Dorsolateral prefrontal cortex (tissue), 120 donors: ENCODE measurements at regions of chr6 and their contacts with region 1.

Region 1: GRCh38 chr6:118651282-118652050 is at the start of gene CEP85L:
- DNase-seq: peak; percentile 84 to 95 (median 92)
- H3K4me3 ChIP-seq: peak within 1 kb of the TSS; percentile 73 to 98 (median 92)
- H3K27ac ChIP-seq: peak within 1 kb of the TSS; percentile 83 to 100 (median 96)
- H3K27me3 ChIP-seq: no peaks in the 10 kb centered on the region
- CTCF ChIP-seq: peak in 22 of 56 donors; percentile 3 to 49 (median 16)
- total RNA-seq, gene CEP85L: 25.2 to 62.1 (median 36.1) TPM

Region 2: DNA sequence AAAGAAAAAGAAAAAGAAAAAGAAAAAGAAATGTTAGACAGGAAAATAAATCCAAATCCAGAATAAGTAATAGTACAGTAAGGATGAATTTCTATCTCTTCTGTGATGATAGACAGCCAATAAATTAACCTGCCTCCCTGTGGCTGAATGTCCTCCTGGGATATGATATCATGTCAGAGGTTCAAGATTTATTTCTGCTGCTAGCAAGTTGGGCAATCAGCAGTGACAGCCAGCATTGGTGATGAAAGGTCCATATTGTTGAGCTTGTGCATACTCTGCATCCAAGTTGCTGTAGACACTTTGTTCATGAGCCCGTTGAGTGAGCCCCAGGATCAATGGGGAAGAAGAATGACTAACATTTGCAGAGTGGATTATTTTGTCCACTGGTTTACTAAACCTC is 44.8 kb after region 1 on chr6:
- intact Hi-C with region 1: no loop called
- DNase-seq: no peak
- H3K4me3 ChIP-seq: no peak overlapping the region
- H3K27ac ChIP-seq: no peak overlapping the region
- H3K27me3 ChIP-seq: no peaks in the 10 kb centered on the region
- CTCF ChIP-seq: no peak

Region 3: DNA sequence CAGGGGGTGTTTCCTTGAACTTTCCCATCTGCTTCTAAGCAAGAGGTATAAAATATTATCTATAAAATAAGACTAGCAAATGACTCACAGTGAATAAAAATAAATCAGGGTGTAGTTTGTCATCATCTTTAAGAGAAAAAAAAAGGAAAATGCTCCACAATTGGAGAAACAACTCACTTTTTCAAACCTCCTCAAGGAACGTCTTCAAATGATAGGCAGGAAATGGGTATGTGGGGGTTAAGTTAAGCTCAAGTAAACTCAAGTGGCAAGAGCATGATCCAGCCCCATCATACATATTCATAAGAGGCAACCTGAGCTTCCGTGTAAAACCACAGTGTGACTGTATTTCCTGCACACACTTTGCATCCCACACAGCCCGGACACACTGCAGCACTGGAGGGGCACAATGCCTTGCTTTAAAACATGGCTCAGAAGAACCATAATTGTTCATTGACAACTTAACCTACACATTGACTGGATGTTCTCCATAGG is 58.4 kb after region 1 on chr6:
- intact Hi-C with region 1: loop called (anchors 2 to 5 kb)
- DNase-seq: no peak
- H3K4me3 ChIP-seq: peak overlapping the region in 42 of 59 donors; percentile 10 to 64 (median 49)
- H3K27ac ChIP-seq: peak overlapping the region in 47 of 59 donors; percentile 2 to 81 (median 57)
- H3K27me3 ChIP-seq: no peaks in the 10 kb centered on the region
- CTCF ChIP-seq: no peak

Region 4: GRCh38 chr6:118776607-118777549 is 125.4 kb after region 1 on chr6:
- intact Hi-C with region 1: loop called (anchors 5 to 10 kb)
- DNase-seq: peak in 6 of 10 donors; percentile 38 to 83 (median 64)
- H3K4me3 ChIP-seq: peak overlapping the region in 2 of 59 donors; percentile 6 to 16
- H3K27ac ChIP-seq: no peak overlapping the region
- H3K27me3 ChIP-seq: no peaks in the 10 kb centered on the region
- CTCF ChIP-seq: peak; percentile 52 to 88 (median 79)

Region 5: DNA sequence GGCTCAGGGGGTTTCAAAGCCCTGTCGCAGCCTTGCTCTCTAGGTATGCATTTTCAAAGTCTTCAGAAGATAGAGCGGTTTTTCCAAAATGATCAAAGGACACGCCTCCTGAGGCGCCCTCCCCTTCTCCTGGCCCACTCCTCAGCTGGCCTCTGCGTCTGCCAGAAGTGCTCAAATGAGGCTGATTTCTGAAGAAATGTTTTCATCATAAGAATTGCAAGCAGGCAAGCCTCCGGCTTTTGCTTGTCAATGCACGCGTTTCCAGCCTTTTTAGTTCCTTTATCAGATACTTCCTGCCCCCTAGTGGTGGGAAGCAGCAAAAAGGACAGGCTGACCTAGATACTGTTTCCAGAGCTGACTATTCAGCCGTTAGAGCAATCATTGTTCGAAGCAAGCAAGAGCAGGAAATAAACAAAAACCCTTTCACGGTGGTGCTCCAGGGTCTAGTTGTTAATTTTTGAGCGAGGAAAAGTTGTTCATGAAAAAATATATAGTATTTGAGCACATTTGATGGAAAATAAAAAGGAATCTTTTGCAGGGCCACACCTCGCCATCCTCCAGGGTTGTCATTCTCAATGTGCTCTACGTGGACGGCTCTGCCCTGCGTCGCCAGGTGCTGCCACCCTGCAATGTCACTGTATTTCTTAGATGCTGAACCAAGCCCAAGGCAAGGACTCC is 149.1 kb after region 1 on chr6:
- intact Hi-C with region 1: loop called (anchors 5 to 10 kb)
- DNase-seq: peak; percentile 44 to 97 (median 86)
- H3K4me3 ChIP-seq: peak overlapping the region in 55 of 59 donors; percentile 9 to 64 (median 39)
- H3K27ac ChIP-seq: peak overlapping the region in 52 of 59 donors; percentile 9 to 87 (median 66)
- H3K27me3 ChIP-seq: no peaks in the 10 kb centered on the region
- CTCF ChIP-seq: peak; percentile 85 to 100 (median 94)

Region 6: DNA sequence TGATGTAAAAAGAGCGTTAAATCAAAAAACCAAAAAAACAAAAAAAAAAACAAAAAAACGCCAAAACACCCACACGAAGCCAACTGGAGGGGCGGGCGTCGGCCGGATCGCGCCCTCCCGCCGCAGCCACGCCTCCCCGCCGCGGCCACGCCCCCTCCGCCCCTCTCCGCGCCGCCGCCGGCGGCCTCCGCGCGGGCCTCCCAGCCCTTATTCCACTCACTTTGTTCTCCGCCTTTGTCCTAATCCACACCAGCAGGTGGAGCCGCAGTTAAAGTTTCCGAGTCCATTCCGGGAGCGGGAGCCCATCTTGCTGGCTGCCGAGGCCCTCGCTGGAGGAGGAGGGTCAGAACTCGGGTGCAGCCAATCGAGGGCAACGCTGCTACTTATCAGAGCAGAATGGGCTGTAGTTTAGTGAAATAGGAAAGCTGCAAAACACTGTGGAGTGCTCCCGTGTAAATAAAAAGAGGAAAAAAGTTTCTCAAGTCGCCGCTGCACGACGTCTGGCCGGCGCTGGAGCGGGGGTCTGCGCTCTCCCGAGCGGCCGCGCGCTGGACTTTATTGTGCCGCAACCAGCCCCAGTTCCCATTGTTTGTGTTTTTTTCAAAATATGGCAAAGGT is 242.4 kb after region 1 on chr6 and contains the start of gene ASF1A:
- intact Hi-C with region 1: loop called (anchors 2 kb)
- DNase-seq: peak; percentile 85 to 97 (median 97)
- H3K4me3 ChIP-seq: peak within 1 kb of the TSS; percentile 59 to 96 (median 86)
- H3K27ac ChIP-seq: peak within 1 kb of the TSS; percentile 75 to 99 (median 95)
- H3K27me3 ChIP-seq: no peaks in the 10 kb centered on the region
- CTCF ChIP-seq: peak; percentile 37 to 88 (median 62)
- total RNA-seq, gene ASF1A: 14.8 to 32.4 (median 23.9) TPM